ENCODE measurements at regions of chr9 and their contacts with region 1.

Region 1: GRCh38 chr9:4221936-4222335 is 77.9 kb downstream of the GLIS3 start:
- DNase-seq: no peak

Region 2: GRCh38 chr9:2655411-2655901 is 1566.5 kb before region 1 on chr9:
- intact Hi-C with region 1: no loop called
- DNase-seq: no peak

Region 3: GRCh38 chr9:4258321-4258720 is 36.4 kb after region 1 on chr9:
- intact Hi-C with region 1: loop called in 1 of 2 experiments (anchors 1 kb)
- DNase-seq: no peak

Region 4: GRCh38 chr9:4353236-4353635 is 131.3 kb after region 1 on chr9:
- intact Hi-C with region 1: no loop called
- DNase-seq: no peak

Measured in posterior vena cava (tissue), 2 donors.